Panc1 (cell line): ENCODE measurements at regions of chr3 and their contacts with region 1.

Region 1: DNA sequence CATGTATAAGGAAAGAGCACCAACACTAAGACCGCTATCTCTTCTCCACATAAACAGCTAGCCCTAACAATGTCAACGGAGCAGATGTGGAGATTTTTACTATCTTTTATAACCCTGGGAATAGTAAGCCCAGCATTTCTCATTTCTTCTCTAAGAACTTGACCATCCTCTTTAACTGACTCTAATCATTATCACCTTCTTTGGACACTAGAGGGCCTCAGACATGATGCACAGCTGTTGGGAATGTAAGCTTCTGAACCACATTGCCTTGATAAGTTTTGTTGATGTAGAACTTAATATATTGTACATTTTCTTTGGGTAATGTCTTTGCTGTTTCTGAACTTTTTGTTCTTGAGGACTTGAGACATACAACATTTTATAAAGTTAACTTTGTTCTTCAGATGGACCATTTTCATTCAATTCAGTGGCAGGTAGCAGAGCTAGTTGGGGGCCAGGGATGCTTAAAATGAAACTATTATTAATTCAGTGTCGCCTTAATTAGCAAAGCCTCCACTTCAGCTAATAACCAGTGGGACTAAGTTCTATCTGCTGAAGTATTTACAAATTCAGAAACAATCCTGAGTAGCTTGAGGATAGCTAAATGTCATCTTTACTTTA is 9.6 kb upstream of the TAGLN3 start:
- DNase-seq: peak; percentile 47
- ATAC-seq: peak; percentile 98
- H3K4me3 ChIP-seq: no peak overlapping the region
- H3K27ac ChIP-seq: no peak overlapping the region
- H3K4me1 ChIP-seq: no peaks in the 10 kb centered on the region
- H3K27me3 ChIP-seq: no peaks in the 10 kb centered on the region
- CTCF ChIP-seq: peak; percentile 81

Region 2: GRCh38 chr3:111735271-111735758 is 253.9 kb before region 1 on chr3:
- CTCF ChIA-PET with region 1: no interaction called
- POLR2A ChIA-PET with region 1: no interaction called
- in situ Hi-C with region 1: no loop called
- intact Hi-C with region 1: no loop called
- DNase-seq: no peak
- ATAC-seq: peak; percentile 73
- H3K4me3 ChIP-seq: no peak overlapping the region
- H3K27ac ChIP-seq: no peak overlapping the region
- H3K4me1 ChIP-seq: peaks cover 2% of the 10 kb centered on the region; the same call in 1 of the 2 replicates
- H3K27me3 ChIP-seq: no peaks in the 10 kb centered on the region
- CTCF ChIP-seq: no peak

Region 3: GRCh38 chr3:111978493-111979433 is 10.4 kb before region 1 on chr3 and contains the start of gene ABHD10:
- CTCF ChIA-PET with region 1: interaction called, 10 read pairs
- POLR2A ChIA-PET with region 1: interaction called, 7 read pairs
- in situ Hi-C with region 1: no loop called
- intact Hi-C with region 1: no loop called
- DNase-seq: peak; percentile 94
- ATAC-seq: peak; percentile 99
- H3K4me3 ChIP-seq: peak within 1 kb of the TSS; percentile 74 to 88
- H3K27ac ChIP-seq: peak within 1 kb of the TSS; percentile 87
- H3K4me1 ChIP-seq: peaks cover 11% of the 10 kb centered on the region; the same call in 1 of the 2 replicates
- H3K27me3 ChIP-seq: peaks cover 10% of the 10 kb centered on the region; the same call in 1 of the 2 replicates
- CTCF ChIP-seq: no peak
- total RNA-seq, gene ABHD10: 30.3 TPM

Region 4: DNA sequence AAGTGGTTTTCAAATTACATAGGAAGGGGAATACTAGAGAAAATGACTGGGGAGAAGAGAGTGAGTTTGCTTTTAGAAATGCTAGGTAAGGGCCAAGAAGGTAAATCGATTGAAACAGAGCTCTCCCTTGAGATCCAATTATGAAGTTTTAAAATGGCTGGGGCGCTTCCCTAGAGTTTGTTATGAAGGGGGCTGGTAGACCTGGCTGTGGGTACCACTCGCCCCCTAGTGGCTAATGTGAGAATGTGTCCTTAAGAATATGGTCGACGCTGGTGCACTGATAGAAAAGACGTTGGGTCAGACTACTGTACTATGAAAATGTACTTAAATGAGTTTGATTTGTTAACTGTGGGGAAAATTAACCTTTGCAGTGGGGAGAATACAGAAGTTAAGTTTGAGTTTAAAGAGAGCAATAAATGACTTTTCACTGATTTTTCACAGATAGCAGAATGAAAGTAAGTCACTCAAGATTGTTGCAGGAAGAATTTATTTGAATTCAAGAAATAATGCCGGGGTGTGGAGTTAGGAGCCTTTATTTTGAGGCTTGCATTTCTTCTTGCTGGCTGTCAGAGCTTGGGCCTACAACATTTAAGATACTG is 54.5 kb after region 1 on chr3:
- CTCF ChIA-PET with region 1: interaction called, 6 read pairs
- POLR2A ChIA-PET with region 1: no interaction called
- in situ Hi-C with region 1: no loop called
- intact Hi-C with region 1: loop called (anchors 2 kb)
- DNase-seq: peak; percentile 51
- ATAC-seq: peak; percentile 98
- H3K4me3 ChIP-seq: no peak overlapping the region
- H3K27ac ChIP-seq: no peak overlapping the region
- H3K4me1 ChIP-seq: peaks cover 5% of the 10 kb centered on the region; the same call in 1 of the 2 replicates
- H3K27me3 ChIP-seq: peaks cover 16% of the 10 kb centered on the region
- CTCF ChIP-seq: peak; percentile 97